GM12878 (cell line): ENCODE measurements at regions of chr4 and their contacts with region 1.

Region 1: DNA sequence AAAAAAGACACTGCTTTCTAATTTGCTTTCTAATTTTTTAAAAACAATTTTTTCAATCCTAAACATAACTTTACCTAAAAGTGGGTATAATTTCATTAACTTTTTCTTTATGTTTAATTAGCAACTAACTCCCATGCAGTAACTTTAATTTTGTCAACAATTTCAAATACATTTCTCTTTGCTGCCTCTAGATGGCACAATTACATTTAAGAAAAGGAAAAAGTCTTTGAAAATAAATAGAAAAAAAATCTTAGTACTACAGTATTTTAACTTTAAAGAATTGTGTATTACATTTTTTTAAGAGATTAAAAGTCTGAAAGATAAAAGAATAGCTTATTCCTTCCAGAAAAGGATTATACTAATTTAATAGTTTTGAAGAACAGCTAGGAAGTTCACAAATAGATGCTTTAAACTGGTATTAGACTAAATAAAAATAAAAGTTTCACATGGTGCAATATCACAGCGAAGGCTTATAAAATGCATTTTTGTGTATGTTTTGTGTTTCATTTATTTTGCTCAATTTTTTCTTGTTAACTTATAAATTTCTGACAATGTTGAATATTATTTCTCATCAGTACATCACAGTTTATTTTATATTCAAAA is 105.1 kb downstream of the ADGRA3 start:
- DNase-seq: no peak
- ATAC-seq: no peak
- H3K4me3 ChIP-seq: no peak overlapping the region
- H3K27ac ChIP-seq: no peak overlapping the region
- H3K4me1 ChIP-seq: no peaks in the 10 kb centered on the region
- H3K27me3 ChIP-seq: no peaks in the 10 kb centered on the region
- CTCF ChIP-seq: peak in 2 of 3 experiments; percentile 31 to 46; a peak in 4 of 6 replicates
- EP300 ChIP-seq: no peak
- POLR2A ChIP-seq: no peak
- RAD21 ChIP-seq: peak; percentile 34; the same call in 1 of the 2 replicates

Region 2: GRCh38 chr4:22389240-22389870 is 21.4 kb before region 1 on chr4:
- CTCF ChIA-PET with region 1: interaction called, 19 read pairs
- POLR2A ChIA-PET with region 1: no interaction called
- RAD21 ChIA-PET with region 1: interaction called, 5 read pairs
- SMC1A ChIA-PET with region 1: interaction called, 8 read pairs
- in situ Hi-C with region 1: no loop called
- intact Hi-C with region 1: no loop called
- DNase-seq: no peak
- ATAC-seq: peak; percentile 92
- H3K4me3 ChIP-seq: no peak overlapping the region
- H3K27ac ChIP-seq: no peak overlapping the region
- H3K4me1 ChIP-seq: no peaks in the 10 kb centered on the region
- H3K27me3 ChIP-seq: no peaks in the 10 kb centered on the region
- CTCF ChIP-seq: peak; percentile 67 to 71 (median 70)
- EP300 ChIP-seq: no peak
- POLR2A ChIP-seq: no peak
- RAD21 ChIP-seq: peak; percentile 82

Region 3: GRCh38 chr4:22463179-22463578 is 52.4 kb after region 1 on chr4:
- CTCF ChIA-PET with region 1: interaction called, 15 read pairs
- POLR2A ChIA-PET with region 1: no interaction called
- RAD21 ChIA-PET with region 1: no interaction called
- SMC1A ChIA-PET with region 1: interaction called, 4 read pairs
- in situ Hi-C with region 1: no loop called
- intact Hi-C with region 1: no loop called
- DNase-seq: no peak
- ATAC-seq: peak; percentile 65
- H3K4me3 ChIP-seq: no peak overlapping the region
- H3K27ac ChIP-seq: no peak overlapping the region
- H3K4me1 ChIP-seq: no peaks in the 10 kb centered on the region
- H3K27me3 ChIP-seq: no peaks in the 10 kb centered on the region
- CTCF ChIP-seq: no peak
- EP300 ChIP-seq: no peak
- POLR2A ChIP-seq: no peak
- RAD21 ChIP-seq: no peak

Region 4: GRCh38 chr4:22500831-22501719 is 90.3 kb after region 1 on chr4:
- CTCF ChIA-PET with region 1: interaction called, 13 read pairs
- POLR2A ChIA-PET with region 1: no interaction called
- RAD21 ChIA-PET with region 1: no interaction called
- SMC1A ChIA-PET with region 1: interaction called, 4 read pairs
- in situ Hi-C with region 1: no loop called
- intact Hi-C with region 1: loop called (anchors 5 kb)
- DNase-seq: peak; percentile 28
- ATAC-seq: peak; percentile 77
- H3K4me3 ChIP-seq: no peak overlapping the region
- H3K27ac ChIP-seq: no peak overlapping the region
- H3K4me1 ChIP-seq: no peaks in the 10 kb centered on the region
- H3K27me3 ChIP-seq: no peaks in the 10 kb centered on the region
- CTCF ChIP-seq: no peak
- EP300 ChIP-seq: peak in 1 of 2 experiments; percentile 70; a peak in 1 of 4 replicates
- POLR2A ChIP-seq: no peak
- RAD21 ChIP-seq: no peak

Region 5: DNA sequence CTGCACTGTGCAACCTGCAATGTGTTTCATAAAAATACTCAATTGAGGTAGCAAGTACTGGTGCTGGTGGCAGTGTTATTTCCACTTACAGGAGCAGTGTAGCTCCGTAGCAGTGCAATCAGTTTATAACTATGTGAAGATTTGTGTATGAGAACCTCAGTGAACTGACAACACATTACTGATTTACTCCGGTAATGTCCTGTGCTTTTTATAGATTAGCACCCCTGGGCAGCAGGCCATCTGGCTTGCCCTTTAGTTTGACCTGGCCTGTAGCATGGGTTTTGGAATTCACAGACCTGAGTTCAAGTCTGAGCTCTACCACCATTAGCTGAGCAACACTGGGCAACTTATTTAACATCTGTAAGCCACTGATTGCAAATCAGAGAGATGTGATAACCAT is 203.4 kb after region 1 on chr4:
- CTCF ChIA-PET with region 1: interaction called, 5 read pairs
- POLR2A ChIA-PET with region 1: no interaction called
- RAD21 ChIA-PET with region 1: interaction called, 4 read pairs
- SMC1A ChIA-PET with region 1: interaction called, 7 read pairs
- in situ Hi-C with region 1: loop called (anchors 5 kb)
- intact Hi-C with region 1: no loop called
- DNase-seq: no peak
- ATAC-seq: no peak
- H3K4me3 ChIP-seq: no peak overlapping the region
- H3K27ac ChIP-seq: no peak overlapping the region
- H3K4me1 ChIP-seq: no peaks in the 10 kb centered on the region
- H3K27me3 ChIP-seq: no peaks in the 10 kb centered on the region
- CTCF ChIP-seq: no peak
- EP300 ChIP-seq: no peak
- POLR2A ChIP-seq: no peak
- RAD21 ChIP-seq: no peak

Region 6: GRCh38 chr4:22678940-22679854 is 268.5 kb after region 1 on chr4:
- CTCF ChIA-PET with region 1: interaction called, 25 read pairs
- POLR2A ChIA-PET with region 1: no interaction called
- RAD21 ChIA-PET with region 1: interaction called, 3 read pairs
- SMC1A ChIA-PET with region 1: interaction called, 18 read pairs
- in situ Hi-C with region 1: no loop called
- intact Hi-C with region 1: no loop called
- DNase-seq: no peak
- ATAC-seq: no peak
- H3K4me3 ChIP-seq: no peak overlapping the region
- H3K27ac ChIP-seq: no peak overlapping the region
- H3K4me1 ChIP-seq: no peaks in the 10 kb centered on the region
- H3K27me3 ChIP-seq: no peaks in the 10 kb centered on the region
- CTCF ChIP-seq: no peak
- EP300 ChIP-seq: no peak
- POLR2A ChIP-seq: no peak
- RAD21 ChIP-seq: no peak